Activated CD8-positive, alpha-beta T cell treated with anti-CD3 and anti-CD28 coated beads for 36 hours (primary cell): ENCODE measurements at regions of chr7 and their contacts with region 1.

Region 1: GRCh38 chr7:43582503-43583423 is at the start of gene STK17A:
- DNase-seq: peak; percentile 93
- ATAC-seq: peak; percentile 85
- H3K4me3 Mint-ChIP-seq: peak within 1 kb of the TSS; percentile 93
- H3K27ac Mint-ChIP-seq: peak within 1 kb of the TSS; percentile 93
- H3K4me1 Mint-ChIP-seq: peaks cover 15% of the 10 kb centered on the region
- H3K27me3 Mint-ChIP-seq: peaks cover 2% of the 10 kb centered on the region
- CTCF ChIP-seq: peak; percentile 98
- total RNA-seq, gene STK17A: 42.4 to 46.1 TPM

Region 2: GRCh38 chr7:43294080-43294630 is 288.6 kb before region 1 on chr7:
- CTCF ChIA-PET with region 1: no interaction called
- POLR2A ChIA-PET with region 1: no interaction called
- intact Hi-C with region 1: no loop called
- DNase-seq: no peak
- ATAC-seq: no peak
- H3K4me3 Mint-ChIP-seq: no peak overlapping the region
- H3K27ac Mint-ChIP-seq: no peak overlapping the region
- H3K4me1 Mint-ChIP-seq: no peaks in the 10 kb centered on the region
- H3K27me3 Mint-ChIP-seq: peaks cover 2% of the 10 kb centered on the region
- CTCF ChIP-seq: no peak

Region 3: DNA sequence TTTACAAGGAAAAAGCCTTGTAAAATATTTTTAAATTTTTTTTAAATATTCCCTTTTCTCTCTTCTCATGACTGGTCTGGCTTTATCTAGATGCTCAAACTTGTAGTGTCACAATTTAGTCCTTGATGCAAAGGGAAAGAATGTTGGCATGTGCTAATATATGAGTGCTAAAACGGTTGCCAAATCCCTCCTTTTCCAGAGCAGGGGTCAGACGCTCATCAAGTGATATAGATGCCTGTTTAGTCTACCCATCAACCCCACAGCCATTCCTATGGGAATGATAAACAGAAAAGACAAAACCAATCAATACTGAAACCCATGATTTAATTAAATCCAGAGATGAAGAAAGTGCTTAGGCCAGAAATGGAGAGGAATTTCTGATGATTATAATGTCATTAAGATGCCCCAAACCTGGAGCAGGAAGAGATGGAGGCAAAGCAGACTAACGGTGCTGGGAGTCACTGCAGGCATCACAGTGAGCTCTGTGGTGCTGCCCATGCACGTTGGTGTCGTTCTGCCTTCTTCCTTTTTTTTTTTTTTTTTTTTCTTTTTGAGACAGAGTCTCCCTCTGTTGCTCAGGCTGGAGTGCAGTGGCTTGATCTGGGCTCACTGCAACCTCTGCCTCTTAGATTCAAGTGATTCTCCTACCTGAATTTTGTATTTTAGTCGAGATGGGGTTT is 209.9 kb before region 1 on chr7:
- CTCF ChIA-PET with region 1: no interaction called
- POLR2A ChIA-PET with region 1: no interaction called
- intact Hi-C with region 1: no loop called
- DNase-seq: no peak
- ATAC-seq: no peak
- H3K4me3 Mint-ChIP-seq: no peak overlapping the region
- H3K27ac Mint-ChIP-seq: no peak overlapping the region
- H3K4me1 Mint-ChIP-seq: no peaks in the 10 kb centered on the region
- H3K27me3 Mint-ChIP-seq: peaks cover 8% of the 10 kb centered on the region
- CTCF ChIP-seq: no peak

Region 4: GRCh38 chr7:43612599-43613589 is 30.1 kb after region 1 on chr7:
- CTCF ChIA-PET with region 1: interaction called, 123 read pairs
- POLR2A ChIA-PET with region 1: interaction called, 10 read pairs
- intact Hi-C with region 1: no loop called
- DNase-seq: peak; percentile 52
- ATAC-seq: peak; percentile 79
- H3K4me3 Mint-ChIP-seq: peak overlapping the region; percentile 22
- H3K27ac Mint-ChIP-seq: peak overlapping the region; percentile 96
- H3K4me1 Mint-ChIP-seq: peaks cover 67% of the 10 kb centered on the region
- H3K27me3 Mint-ChIP-seq: no peaks in the 10 kb centered on the region
- CTCF ChIP-seq: no peak

Region 5: GRCh38 chr7:43647673-43648472 is 65.1 kb after region 1 on chr7:
- CTCF ChIA-PET with region 1: interaction called, 173 read pairs
- POLR2A ChIA-PET with region 1: interaction called, 159 read pairs
- intact Hi-C with region 1: no loop called
- DNase-seq: peak; percentile 74
- ATAC-seq: peak; percentile 58
- H3K4me3 Mint-ChIP-seq: peak overlapping the region; percentile 57
- H3K27ac Mint-ChIP-seq: peak overlapping the region; percentile 99
- H3K4me1 Mint-ChIP-seq: peaks cover 93% of the 10 kb centered on the region
- H3K27me3 Mint-ChIP-seq: no peaks in the 10 kb centered on the region
- CTCF ChIP-seq: no peak

Region 6: GRCh38 chr7:43682172-43682571 is 99.4 kb after region 1 on chr7:
- CTCF ChIA-PET with region 1: interaction called, 44 read pairs
- POLR2A ChIA-PET with region 1: no interaction called
- intact Hi-C with region 1: no loop called
- DNase-seq: no peak
- ATAC-seq: no peak
- H3K4me3 Mint-ChIP-seq: no peak overlapping the region
- H3K27ac Mint-ChIP-seq: no peak overlapping the region
- H3K4me1 Mint-ChIP-seq: peaks cover 74% of the 10 kb centered on the region
- H3K27me3 Mint-ChIP-seq: no peaks in the 10 kb centered on the region
- CTCF ChIP-seq: no peak

Region 7: DNA sequence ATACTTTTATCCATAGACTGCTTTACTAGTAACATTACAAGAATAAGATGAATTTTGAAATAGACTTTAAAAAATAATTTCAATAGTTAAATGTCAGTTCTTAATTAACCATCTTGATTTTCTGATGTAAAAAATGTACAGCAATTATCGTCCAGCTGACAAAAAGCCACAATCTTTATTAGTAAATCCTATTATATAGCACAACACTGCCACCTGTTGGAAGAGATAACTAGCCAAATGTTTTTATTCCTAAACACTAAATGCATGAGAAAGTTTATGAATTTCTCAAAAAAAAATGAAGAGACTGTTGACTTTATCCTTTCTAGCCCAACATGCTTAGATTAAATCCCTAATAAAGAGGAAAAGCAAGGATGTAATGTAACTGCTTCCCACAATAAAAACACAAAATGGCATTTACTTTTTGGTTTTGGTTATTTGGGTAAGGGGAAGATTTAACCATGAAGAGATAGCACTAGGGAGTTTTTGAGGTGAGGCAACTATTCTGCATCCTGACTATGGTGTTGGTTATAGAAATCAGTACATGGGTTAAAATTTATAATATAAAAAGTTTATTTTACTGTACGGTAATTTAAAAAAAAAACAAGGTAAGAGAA is 138.5 kb after region 1 on chr7:
- CTCF ChIA-PET with region 1: interaction called, 123 read pairs
- POLR2A ChIA-PET with region 1: interaction called, 3 read pairs
- intact Hi-C with region 1: loop called (anchors 5 kb)
- DNase-seq: no peak
- ATAC-seq: no peak
- H3K4me3 Mint-ChIP-seq: no peak overlapping the region
- H3K27ac Mint-ChIP-seq: no peak overlapping the region
- H3K4me1 Mint-ChIP-seq: peaks cover 52% of the 10 kb centered on the region
- H3K27me3 Mint-ChIP-seq: no peaks in the 10 kb centered on the region
- CTCF ChIP-seq: peak; percentile 80

Region 8: DNA sequence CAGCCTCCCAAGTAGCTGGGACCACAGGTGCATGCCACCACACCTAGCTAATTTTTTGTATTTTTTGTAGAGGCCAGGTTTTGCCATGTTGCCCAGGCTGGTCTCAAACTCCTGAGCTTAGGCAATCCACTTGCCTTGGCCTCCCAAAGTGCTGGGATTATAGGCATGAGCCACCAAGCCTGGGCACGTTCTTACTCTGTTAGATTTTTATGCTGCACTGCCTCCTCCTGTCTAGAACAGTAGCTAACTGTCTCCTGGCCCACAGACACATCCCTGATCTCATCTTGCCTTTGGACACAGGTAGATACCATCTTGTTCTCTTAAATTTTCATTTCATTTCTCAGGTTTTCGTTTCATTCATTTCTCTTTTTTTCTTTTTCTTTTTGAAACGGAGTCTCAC is 216.8 kb after region 1 on chr7:
- CTCF ChIA-PET with region 1: interaction called, 10 read pairs
- POLR2A ChIA-PET with region 1: no interaction called
- intact Hi-C with region 1: no loop called
- DNase-seq: no peak
- ATAC-seq: no peak
- H3K4me3 Mint-ChIP-seq: no peak overlapping the region
- H3K27ac Mint-ChIP-seq: no peak overlapping the region
- H3K4me1 Mint-ChIP-seq: peaks cover 2% of the 10 kb centered on the region
- H3K27me3 Mint-ChIP-seq: no peaks in the 10 kb centered on the region
- CTCF ChIP-seq: no peak